Kidney (tissue), 22 donors: ENCODE measurements at regions of chr6 and their contacts with region 1.

Region 1: GRCh38 chr6:137094411-137095008 is 49.7 kb upstream of the IL20RA start:
- DNase-seq: peak in 4 of 5 donors; percentile 44 to 82 (median 68)
- H3K4me3 ChIP-seq: no peak overlapping the region
- H3K27ac ChIP-seq: no peak overlapping the region
- H3K4me1 ChIP-seq: no peaks in the 10 kb centered on the region
- H3K27me3 ChIP-seq: no peaks in the 10 kb centered on the region
- CTCF ChIP-seq: peak; percentile 69

Region 2: GRCh38 chr6:136761227-136761922 is 333.1 kb before region 1 on chr6:
- intact Hi-C with region 1: no loop called
- DNase-seq: peak in 2 of 5 donors; percentile 49 to 79
- H3K4me3 ChIP-seq: peak overlapping the region in 1 of 3 donors; percentile 11
- H3K27ac ChIP-seq: peak overlapping the region; percentile 25 to 68
- H3K4me1 ChIP-seq: peaks cover 0 to 26% (median 25%) of the 10 kb centered on the region in 3 donors
- H3K27me3 ChIP-seq: no peaks in the 10 kb centered on the region
- CTCF ChIP-seq: no peak

Region 3: GRCh38 chr6:137313928-137314855 is 219.7 kb after region 1 on chr6:
- intact Hi-C with region 1: loop called (anchors 10 kb)
- DNase-seq: peak; percentile 75 to 86 (median 77)
- H3K4me3 ChIP-seq: peak overlapping the region in 2 of 3 donors; percentile 20 to 22
- H3K27ac ChIP-seq: no peak overlapping the region
- H3K4me1 ChIP-seq: peaks cover 0 to 6% (median 0%) of the 10 kb centered on the region in 3 donors
- H3K27me3 ChIP-seq: no peaks in the 10 kb centered on the region
- CTCF ChIP-seq: peak; percentile 86

Region 4: DNA sequence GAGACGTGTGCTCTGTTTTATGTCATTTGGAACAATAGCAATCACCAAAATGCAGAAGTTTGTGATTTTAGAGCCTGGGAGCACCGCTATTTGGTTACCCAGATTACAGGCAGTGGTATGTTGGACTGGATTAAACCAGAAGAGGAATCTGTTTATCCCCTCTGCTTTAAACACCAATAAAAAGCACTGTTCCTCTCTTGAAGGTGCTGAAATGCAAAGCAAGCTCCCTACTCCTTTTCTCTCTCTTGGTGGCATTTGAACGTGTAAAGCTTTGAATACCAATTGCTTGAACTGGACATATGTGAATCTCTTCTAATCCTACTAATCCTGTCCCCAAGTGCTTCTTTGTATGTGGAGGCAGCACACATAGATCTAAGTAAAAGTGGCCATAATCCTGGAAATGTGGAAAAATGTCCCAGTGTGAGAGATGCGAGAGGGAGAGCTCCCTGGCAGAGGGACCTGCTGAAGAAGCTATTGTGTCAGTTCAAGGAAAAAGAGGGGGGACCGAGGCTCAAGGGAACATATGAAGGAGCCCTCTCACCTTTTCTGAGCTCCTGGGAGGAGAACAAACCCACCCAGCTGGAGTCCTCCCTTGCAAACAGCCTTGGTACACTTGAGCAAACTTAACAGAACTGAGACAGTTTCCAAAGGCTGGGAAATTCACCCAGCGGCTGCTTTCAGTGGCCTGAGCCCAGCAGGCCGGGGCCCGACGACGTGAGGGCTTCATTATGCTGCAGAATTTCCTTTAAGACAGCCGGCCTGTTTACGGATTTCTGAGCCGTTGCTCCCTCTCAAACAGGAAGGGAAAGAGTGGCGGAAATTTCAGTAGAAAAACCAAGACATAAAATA is 418.5 kb after region 1 on chr6:
- intact Hi-C with region 1: no loop called
- DNase-seq: peak in 2 of 5 donors; percentile 30 to 44
- H3K4me3 ChIP-seq: no peak overlapping the region
- H3K27ac ChIP-seq: no peak overlapping the region
- H3K4me1 ChIP-seq: no peaks in the 10 kb centered on the region
- H3K27me3 ChIP-seq: peaks cover 35% of the 10 kb centered on the region
- CTCF ChIP-seq: no peak